Heart left ventricle (tissue), 16 donors: ENCODE measurements at regions of chr20 and their contacts with region 1.

Region 1: GRCh38 chr20:53547664-53548239 is 45.9 kb downstream of the ZNF217 start:
- DNase-seq: peak in 2 of 5 donors; percentile 16 to 27
- ATAC-seq: peak in 3 of 4 donors; percentile 57 to 76 (median 73)
- H3K4me3 ChIP-seq: no peak overlapping the region
- H3K27ac ChIP-seq: no peak overlapping the region
- H3K4me1 ChIP-seq: peaks cover 0 to 7% (median 0%) of the 10 kb centered on the region in 12 donors
- H3K27me3 ChIP-seq: no peaks in the 10 kb centered on the region
- CTCF ChIP-seq: peak; percentile 62 to 94 (median 82)
- POLR2A ChIP-seq: no peak

Region 2: GRCh38 chr20:52242237-52243230 is 1305.2 kb before region 1 on chr20:
- intact Hi-C with region 1: loop called in 4 of 10 experiments (anchors 5 to 10 kb)
- DNase-seq: no peak
- ATAC-seq: no peak
- H3K4me3 ChIP-seq: no peak overlapping the region
- H3K27ac ChIP-seq: no peak overlapping the region
- H3K4me1 ChIP-seq: no peaks in the 10 kb centered on the region
- H3K27me3 ChIP-seq: peaks cover 0 to 4% (median 0%) of the 10 kb centered on the region in 9 donors
- CTCF ChIP-seq: peak; percentile 42 to 88 (median 68)
- POLR2A ChIP-seq: no peak

Region 3: GRCh38 chr20:52312132-52312729 is 1235.5 kb before region 1 on chr20:
- intact Hi-C with region 1: loop called (anchors 2 to 10 kb)
- DNase-seq: peak in 2 of 5 donors; percentile 25 to 29
- ATAC-seq: peak in 3 of 4 donors; percentile 56 to 67 (median 64)
- H3K4me3 ChIP-seq: no peak overlapping the region
- H3K27ac ChIP-seq: no peak overlapping the region
- H3K4me1 ChIP-seq: peaks cover 0 to 9% (median 0%) of the 10 kb centered on the region in 12 donors
- H3K27me3 ChIP-seq: peaks cover 0 to 7% (median 0%) of the 10 kb centered on the region in 9 donors
- CTCF ChIP-seq: peak; percentile 55 to 84 (median 71)
- POLR2A ChIP-seq: no peak

Region 4: GRCh38 chr20:52747845-52748284 is 799.9 kb before region 1 on chr20:
- intact Hi-C with region 1: loop called in 1 of 10 experiments (anchors 10 kb)
- DNase-seq: peak in 2 of 5 donors; percentile 21 to 24
- ATAC-seq: peak; percentile 72 to 81 (median 77)
- H3K4me3 ChIP-seq: peak overlapping the region in 3 of 12 donors; percentile 3 to 24 (median 6)
- H3K27ac ChIP-seq: peak overlapping the region in 8 of 12 donors; percentile 34 to 67 (median 48)
- H3K4me1 ChIP-seq: no peaks in the 10 kb centered on the region
- H3K27me3 ChIP-seq: no peaks in the 10 kb centered on the region
- CTCF ChIP-seq: peak in 8 of 12 donors; percentile 9 to 46 (median 36)
- POLR2A ChIP-seq: no peak

Region 5: GRCh38 chr20:53157443-53158408 is 390.0 kb before region 1 on chr20:
- intact Hi-C with region 1: loop called in 3 of 10 experiments (anchors 5 to 10 kb)
- DNase-seq: peak in 2 of 5 donors; percentile 15 to 29
- ATAC-seq: no peak
- H3K4me3 ChIP-seq: no peak overlapping the region
- H3K27ac ChIP-seq: no peak overlapping the region
- H3K4me1 ChIP-seq: peaks cover 0 to 6% (median 0%) of the 10 kb centered on the region in 12 donors
- H3K27me3 ChIP-seq: no peaks in the 10 kb centered on the region
- CTCF ChIP-seq: peak in 11 of 12 donors; percentile 7 to 55 (median 38)
- POLR2A ChIP-seq: no peak

Region 6: DNA sequence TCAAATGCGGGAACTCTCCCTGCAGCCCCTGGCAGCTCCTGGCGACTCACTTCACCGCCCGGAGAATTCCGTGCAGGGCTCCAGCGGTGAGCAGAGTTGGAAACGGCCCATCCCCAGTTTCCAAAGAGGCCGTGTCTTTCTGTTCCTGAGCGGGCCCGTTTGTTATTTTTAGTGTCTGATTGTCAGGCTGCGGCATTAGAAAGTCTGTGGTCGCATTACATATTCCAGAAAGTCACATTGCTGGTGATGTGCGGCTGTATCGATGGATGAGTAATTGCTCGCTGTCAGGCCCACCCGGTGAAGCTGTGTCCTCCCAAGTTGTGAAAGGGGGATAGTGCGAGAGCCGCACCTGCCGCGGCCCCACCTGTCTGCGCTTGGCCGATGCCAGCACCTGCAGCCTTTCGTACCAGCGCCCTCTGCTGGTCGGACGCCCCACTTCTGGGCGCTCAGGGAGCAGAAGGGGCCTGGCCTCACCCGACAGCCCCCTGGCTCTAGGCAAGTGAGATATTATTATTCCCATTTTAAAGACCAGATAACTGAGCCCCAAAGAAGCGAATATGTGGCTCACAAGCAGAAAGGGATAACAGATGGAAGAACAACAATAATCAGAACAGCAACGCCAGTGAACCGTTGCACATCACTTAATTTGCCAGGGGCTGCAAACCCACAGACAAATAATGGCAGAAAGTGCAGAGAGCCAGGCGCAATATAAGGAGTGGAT is 330.7 kb before region 1 on chr20:
- intact Hi-C with region 1: loop called in 2 of 10 experiments (anchors 10 kb)
- DNase-seq: peak; percentile 46 to 84 (median 64)
- ATAC-seq: peak in 3 of 4 donors; percentile 81 to 84 (median 82)
- H3K4me3 ChIP-seq: peak overlapping the region in 9 of 12 donors; percentile 5 to 32 (median 24)
- H3K27ac ChIP-seq: no peak overlapping the region
- H3K4me1 ChIP-seq: peaks cover 0 to 8% (median 5%) of the 10 kb centered on the region in 12 donors
- H3K27me3 ChIP-seq: peaks cover 0 to 10% (median 0%) of the 10 kb centered on the region in 9 donors
- CTCF ChIP-seq: peak; percentile 80 to 94 (median 88)
- POLR2A ChIP-seq: no peak

Region 7: DNA sequence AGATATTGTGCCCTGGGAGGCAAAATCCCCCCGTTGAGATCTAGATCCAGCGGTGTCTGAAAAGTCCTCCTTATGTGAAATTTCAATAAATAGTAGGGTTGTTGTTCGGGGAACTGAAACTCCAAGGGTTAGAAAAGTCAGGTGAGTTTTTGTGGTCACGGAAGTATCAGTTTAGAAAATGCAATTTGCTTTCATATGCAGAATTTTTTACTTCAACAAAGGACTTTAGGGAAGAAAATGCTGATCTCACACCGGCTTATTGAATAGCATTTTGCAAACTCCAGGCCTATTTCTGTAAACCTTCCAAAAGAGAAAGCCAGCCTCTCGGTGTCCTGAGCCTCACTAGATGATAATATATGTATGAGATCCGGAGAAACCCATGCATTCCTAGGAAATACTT is 320.9 kb before region 1 on chr20:
- intact Hi-C with region 1: loop called in 1 of 10 experiments (anchors 10 kb)
- DNase-seq: no peak
- ATAC-seq: no peak
- H3K4me3 ChIP-seq: no peak overlapping the region
- H3K27ac ChIP-seq: no peak overlapping the region
- H3K4me1 ChIP-seq: no peaks in the 10 kb centered on the region
- H3K27me3 ChIP-seq: peaks cover 0 to 4% (median 0%) of the 10 kb centered on the region in 9 donors
- CTCF ChIP-seq: no peak
- POLR2A ChIP-seq: no peak

Region 8: GRCh38 chr20:53594068-53595017 is 46.6 kb after region 1 on chr20:
- intact Hi-C with region 1: no loop called
- DNase-seq: peak; percentile 96 to 100 (median 98)
- ATAC-seq: peak; percentile 88 to 96 (median 90)
- H3K4me3 ChIP-seq: peak overlapping the region; percentile 63 to 96 (median 94)
- H3K27ac ChIP-seq: peak overlapping the region; percentile 90 to 100 (median 99)
- H3K4me1 ChIP-seq: peaks cover 0 to 57% (median 18%) of the 10 kb centered on the region in 12 donors
- H3K27me3 ChIP-seq: no peaks in the 10 kb centered on the region
- CTCF ChIP-seq: peak in 11 of 12 donors; percentile 12 to 59 (median 30)
- POLR2A ChIP-seq: peak; percentile 64 to 85

Region 9: DNA sequence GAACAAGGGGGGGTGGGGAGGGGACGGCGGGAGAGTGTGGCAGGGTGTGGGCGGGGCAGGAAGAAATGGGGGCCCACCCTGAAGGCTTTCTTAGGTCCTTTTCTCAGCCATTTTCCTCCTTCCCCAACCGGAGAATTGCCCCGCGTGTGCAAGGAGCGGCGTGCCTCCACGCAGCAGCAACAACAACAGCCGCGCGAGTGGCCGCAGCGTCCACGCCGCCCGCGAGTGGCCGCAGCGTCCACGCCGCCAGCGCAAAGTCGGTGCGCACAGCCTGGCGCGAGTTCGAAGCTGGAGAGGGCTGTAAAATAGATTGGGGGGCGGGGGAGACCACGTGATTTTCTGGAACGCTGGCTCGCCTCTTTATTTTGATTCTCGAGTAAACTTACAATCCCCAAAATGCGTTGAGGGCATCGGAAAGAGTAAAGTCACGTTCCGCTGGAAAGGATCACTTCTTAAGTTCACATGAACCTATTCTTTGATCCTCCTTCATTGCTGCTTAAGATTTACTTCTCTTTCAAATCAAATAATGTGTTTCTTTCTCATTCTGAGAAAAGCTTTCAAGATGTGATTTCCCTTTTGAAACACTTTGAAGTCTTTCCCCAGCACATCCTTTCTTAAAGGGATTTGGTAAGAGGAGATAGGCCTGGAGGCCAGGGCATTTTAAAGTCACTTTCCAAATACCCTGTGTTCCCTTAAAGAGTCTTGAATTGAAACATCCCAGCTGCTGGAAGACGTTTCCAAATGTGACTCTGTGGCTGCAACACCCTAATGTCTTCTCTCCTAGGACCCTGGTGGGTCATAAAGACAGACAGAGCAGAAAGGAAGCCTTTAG is 112.5 kb after region 1 on chr20:
- intact Hi-C with region 1: no loop called
- DNase-seq: peak in 3 of 5 donors; percentile 24 to 38 (median 30)
- ATAC-seq: peak in 3 of 4 donors; percentile 26 to 59 (median 48)
- H3K4me3 ChIP-seq: peak overlapping the region in 11 of 12 donors; percentile 12 to 64 (median 48)
- H3K27ac ChIP-seq: peak overlapping the region; percentile 35 to 81 (median 63)
- H3K4me1 ChIP-seq: peaks cover 0 to 65% (median 14%) of the 10 kb centered on the region in 12 donors
- H3K27me3 ChIP-seq: no peaks in the 10 kb centered on the region
- CTCF ChIP-seq: no peak
- POLR2A ChIP-seq: no peak